ENCODE measurements at regions of chr9 and their contacts with region 1.

Region 1: GRCh38 chr9:91089405-91090129 is 272.2 kb downstream of the AUH start:
- DNase-seq: no peak
- ATAC-seq: peak; percentile 73 to 87 (median 74)
- H3K4me3 ChIP-seq: no peak overlapping the region
- H3K27ac ChIP-seq: no peak overlapping the region
- H3K4me1 ChIP-seq: peaks cover 10% of the 10 kb centered on the region
- H3K27me3 ChIP-seq: no peaks in the 10 kb centered on the region
- CTCF ChIP-seq: peak; percentile 51

Region 2: GRCh38 chr9:91312717-91313344 is 223.3 kb after region 1 on chr9:
- intact Hi-C with region 1: no loop called
- DNase-seq: no peak
- ATAC-seq: no peak
- H3K4me3 ChIP-seq: no peak overlapping the region
- H3K27ac ChIP-seq: no peak overlapping the region
- H3K4me1 ChIP-seq: no peaks in the 10 kb centered on the region
- H3K27me3 ChIP-seq: no peaks in the 10 kb centered on the region
- CTCF ChIP-seq: no peak

Region 3: DNA sequence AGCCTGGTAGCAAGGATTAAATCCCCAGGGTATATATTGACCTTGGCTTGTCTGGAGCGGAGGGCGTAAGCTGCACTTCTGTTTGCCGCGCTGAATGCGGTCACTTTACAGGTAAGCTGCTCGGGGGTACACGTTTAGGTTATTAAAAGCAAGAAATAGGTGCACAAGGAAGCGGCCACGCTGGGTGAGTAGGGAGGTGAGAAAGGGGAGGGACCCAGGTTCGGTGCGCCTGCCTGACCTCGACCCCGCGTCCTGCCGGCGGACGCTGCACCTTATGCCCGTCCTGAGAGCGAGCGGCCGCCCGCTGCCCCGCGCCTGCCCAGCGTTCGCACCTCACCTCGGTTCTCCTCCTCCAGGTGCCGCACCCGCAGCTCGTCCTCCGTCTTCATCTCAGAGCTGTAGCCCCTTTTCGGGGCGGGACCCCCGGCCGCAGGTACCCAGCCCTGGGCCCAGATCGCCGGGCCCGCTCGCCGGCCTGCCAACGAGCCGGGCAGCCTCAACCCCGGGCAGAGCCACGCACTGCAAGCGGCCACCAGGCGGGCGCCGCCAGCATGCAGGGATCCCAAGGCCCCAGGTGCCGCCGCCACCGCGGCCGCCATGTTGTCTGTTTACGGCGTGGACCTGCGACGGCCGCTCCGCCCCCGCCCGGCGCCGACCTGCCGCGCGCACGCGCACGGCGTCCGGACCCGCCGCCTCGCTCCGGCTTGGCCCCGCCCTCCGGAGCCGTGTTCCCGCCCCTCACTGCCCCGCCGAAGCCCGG is 271.9 kb after region 1 on chr9 and contains the start of gene AUH:
- intact Hi-C with region 1: loop called in 1 of 2 experiments (anchors 10 kb)
- DNase-seq: peak; percentile 87 to 93
- ATAC-seq: peak; percentile 98 to 99 (median 99)
- H3K4me3 ChIP-seq: peak within 1 kb of the TSS; percentile 99
- H3K27ac ChIP-seq: peak within 1 kb of the TSS; percentile 98
- H3K4me1 ChIP-seq: peaks cover 38% of the 10 kb centered on the region
- H3K27me3 ChIP-seq: no peaks in the 10 kb centered on the region
- CTCF ChIP-seq: no peak
- total RNA-seq, gene AUH: 14.1 to 20.6 (median 18.4) TPM

Measured in psoas muscle (tissue), 8 donors.